Activated naive CD4-positive, alpha-beta T cell treated with anti-CD3 and anti-CD28 coated beads for 36 hours (primary cell): ENCODE measurements at regions of chr11 and their contacts with region 1.

Region 1: DNA sequence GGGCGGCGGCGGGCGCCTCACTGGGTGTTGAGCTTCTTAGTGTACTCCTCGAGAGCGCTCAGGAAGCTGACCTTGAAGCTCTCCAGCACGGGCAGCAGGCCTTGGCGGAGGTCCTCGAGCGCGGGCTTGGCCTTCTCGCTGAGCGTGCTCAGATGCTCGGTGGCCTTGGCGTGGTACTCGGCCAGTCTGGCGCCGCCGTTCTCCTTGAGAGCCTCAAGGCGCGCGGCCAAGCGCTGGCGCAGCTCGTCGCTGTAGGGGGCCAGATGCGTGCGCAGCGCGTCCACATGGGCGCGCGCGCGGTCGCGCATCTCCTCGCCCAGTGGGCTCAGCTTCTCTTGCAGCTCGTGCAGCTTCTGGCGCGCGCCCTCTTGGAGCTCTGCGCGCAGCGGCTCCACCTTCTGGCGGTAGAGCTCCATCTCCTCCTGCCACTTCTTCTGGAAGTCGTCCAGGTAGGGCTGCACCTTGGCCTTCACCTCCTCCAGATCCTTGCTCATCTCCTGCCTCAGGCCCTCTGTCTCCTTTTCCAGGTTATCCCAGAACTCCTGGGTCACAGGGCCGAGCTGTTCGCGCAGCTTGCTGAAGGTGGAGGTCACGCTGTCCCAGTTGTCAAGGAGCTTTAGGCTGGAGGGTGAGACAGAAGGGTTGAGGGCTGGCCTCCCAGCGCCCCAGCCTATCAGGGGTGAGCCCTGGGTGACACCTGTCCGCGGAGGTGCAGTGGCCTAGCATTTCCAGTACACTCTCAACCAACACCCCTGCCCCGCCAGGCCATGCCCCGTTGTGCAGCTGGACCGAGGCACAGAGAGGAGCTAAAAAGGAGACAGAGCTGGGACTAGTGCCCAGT is 1.4 kb downstream of the APOA1 start:
- DNase-seq: peak; percentile 86
- H3K4me3 Mint-ChIP-seq: peak overlapping the region; percentile 69
- H3K27ac Mint-ChIP-seq: no peak overlapping the region
- H3K4me1 Mint-ChIP-seq: peaks cover 8% of the 10 kb centered on the region
- H3K27me3 Mint-ChIP-seq: peaks cover 4% of the 10 kb centered on the region

Region 2: GRCh38 chr11:116732271-116733042 is 103.6 kb before region 1 on chr11:
- CTCF ChIA-PET with region 1: interaction called, 27 read pairs
- intact Hi-C with region 1: loop called (anchors 1 kb)
- DNase-seq: peak; percentile 77
- H3K4me3 Mint-ChIP-seq: no peak overlapping the region
- H3K27ac Mint-ChIP-seq: no peak overlapping the region
- H3K4me1 Mint-ChIP-seq: peaks cover 10% of the 10 kb centered on the region
- H3K27me3 Mint-ChIP-seq: no peaks in the 10 kb centered on the region

Region 3: DNA sequence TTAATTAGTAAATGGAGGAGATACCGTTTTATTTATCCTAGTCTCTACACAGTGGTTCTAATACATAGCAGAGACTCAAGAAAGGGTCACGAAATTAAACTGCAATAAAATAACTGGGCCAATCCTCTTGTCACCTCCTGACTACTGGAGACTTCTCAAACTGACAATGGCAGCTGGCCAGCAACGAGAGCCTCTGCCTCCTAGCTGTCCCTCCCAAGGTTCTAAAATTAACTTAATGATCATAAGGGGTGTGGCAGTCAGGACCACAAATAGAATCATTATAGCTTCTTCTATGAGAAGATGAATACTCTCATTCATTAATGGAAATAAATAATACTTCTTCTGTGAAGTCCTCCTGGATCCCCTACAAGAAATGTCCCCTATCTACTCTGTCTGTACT is 65.2 kb after region 1 on chr11:
- CTCF ChIA-PET with region 1: no interaction called
- intact Hi-C with region 1: no loop called
- DNase-seq: no peak
- H3K4me3 Mint-ChIP-seq: no peak overlapping the region
- H3K27ac Mint-ChIP-seq: no peak overlapping the region
- H3K4me1 Mint-ChIP-seq: peaks cover 27% of the 10 kb centered on the region
- H3K27me3 Mint-ChIP-seq: no peaks in the 10 kb centered on the region

Region 4: DNA sequence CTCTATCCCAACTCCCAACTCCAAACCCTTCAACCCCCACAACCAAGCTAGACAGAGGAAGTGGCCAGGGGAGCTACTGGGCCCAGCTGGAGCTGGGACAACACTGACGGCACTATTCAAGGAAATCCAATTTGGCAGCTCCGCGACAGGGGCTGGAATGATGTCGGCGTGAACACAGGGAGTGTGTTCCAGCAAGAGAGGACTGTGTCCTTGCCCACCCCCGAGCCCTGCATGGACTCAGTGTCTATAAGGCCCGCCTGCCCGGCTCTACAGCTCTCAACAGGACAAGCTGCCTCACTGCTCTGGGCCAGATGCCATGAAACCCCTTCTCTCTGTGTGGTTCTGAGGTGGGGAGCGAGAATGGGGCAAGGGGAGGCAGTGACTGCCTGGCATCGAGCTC is 384.6 kb after region 1 on chr11:
- CTCF ChIA-PET with region 1: no interaction called
- intact Hi-C with region 1: no loop called
- DNase-seq: no peak
- H3K4me3 Mint-ChIP-seq: no peak overlapping the region
- H3K27ac Mint-ChIP-seq: no peak overlapping the region
- H3K4me1 Mint-ChIP-seq: peaks cover 7% of the 10 kb centered on the region
- H3K27me3 Mint-ChIP-seq: no peaks in the 10 kb centered on the region